ENCODE measurements at regions of chr11 and their contacts with region 1.

Region 1: GRCh38 chr11:123407130-123407995 is 22.7 kb upstream of the GRAMD1B start:
- DNase-seq: no peak
- H3K4me3 ChIP-seq: no peak overlapping the region
- CTCF ChIP-seq: peak; percentile 74

Region 2: DNA sequence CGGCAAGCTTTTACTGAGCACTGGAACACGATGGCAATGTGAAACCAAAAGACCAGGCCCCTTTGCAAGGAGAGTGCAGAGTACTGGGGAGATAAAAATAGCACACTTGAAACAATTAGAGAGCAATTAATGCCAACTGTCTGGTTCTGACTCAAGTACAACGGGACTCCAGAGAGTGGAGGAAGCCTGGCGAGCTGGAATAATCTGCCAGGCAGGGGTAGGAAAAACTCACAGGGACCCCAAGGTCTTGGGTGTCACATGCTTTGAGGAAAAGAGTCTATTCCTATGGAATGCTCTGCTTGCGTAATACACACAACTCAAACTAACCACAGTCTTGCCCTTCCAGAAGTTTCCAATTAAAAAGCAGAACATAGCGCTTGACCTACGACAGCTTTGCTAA is 99.3 kb before region 1 on chr11:
- CTCF ChIA-PET with region 1: interaction called, 10 read pairs
- POLR2A ChIA-PET with region 1: no interaction called
- DNase-seq: peak; percentile 47
- H3K4me3 ChIP-seq: no peak overlapping the region; the same call in 1 of the 2 replicates
- CTCF ChIP-seq: no peak

Region 3: DNA sequence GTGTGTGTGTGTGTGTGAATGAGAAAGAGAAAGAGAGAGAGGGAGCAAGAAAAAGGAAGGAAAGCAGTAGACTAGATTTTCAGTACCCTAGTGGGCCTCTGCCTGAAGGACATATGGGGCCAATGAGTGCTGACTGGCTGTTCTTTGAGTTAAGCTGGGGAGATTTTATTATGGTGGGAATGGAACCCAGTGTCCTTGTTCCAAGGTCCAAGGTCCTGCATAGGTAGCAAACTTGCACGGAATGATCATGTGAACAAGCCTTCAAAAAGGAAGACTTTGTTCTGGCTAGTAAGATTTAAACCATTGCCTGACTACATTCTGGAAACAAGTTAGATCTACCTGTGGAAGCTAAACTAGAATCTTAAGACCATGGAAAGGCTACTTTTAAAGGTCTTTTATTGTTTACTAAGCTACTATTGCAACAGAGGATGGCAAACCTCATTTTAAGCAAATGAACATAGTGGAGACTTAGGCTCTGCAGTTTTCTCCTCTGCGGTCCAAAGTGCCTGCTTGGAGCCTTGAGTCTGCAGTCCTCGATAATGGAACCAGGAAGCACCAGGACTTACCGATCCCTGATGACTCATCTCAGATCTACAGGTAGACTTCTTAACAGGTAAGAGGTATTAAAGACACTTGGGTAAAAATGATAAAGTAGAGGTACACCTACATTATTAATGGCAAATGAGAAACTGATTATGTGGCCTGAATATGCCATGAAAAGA is 12.5 kb after region 1 on chr11:
- CTCF ChIA-PET with region 1: interaction called, 53 read pairs
- POLR2A ChIA-PET with region 1: no interaction called
- DNase-seq: no peak
- H3K4me3 ChIP-seq: no peak overlapping the region
- CTCF ChIP-seq: no peak

Region 4: GRCh38 chr11:123461164-123461563 is 53.8 kb after region 1 on chr11:
- CTCF ChIA-PET with region 1: interaction called, 12 read pairs
- POLR2A ChIA-PET with region 1: no interaction called
- DNase-seq: no peak
- H3K4me3 ChIP-seq: no peak overlapping the region
- CTCF ChIP-seq: no peak

Region 5: GRCh38 chr11:123487157-123487780 is 79.9 kb after region 1 on chr11:
- CTCF ChIA-PET with region 1: interaction called, 422 read pairs
- POLR2A ChIA-PET with region 1: no interaction called
- DNase-seq: no peak
- H3K4me3 ChIP-seq: no peak overlapping the region
- CTCF ChIP-seq: no peak

Region 6: DNA sequence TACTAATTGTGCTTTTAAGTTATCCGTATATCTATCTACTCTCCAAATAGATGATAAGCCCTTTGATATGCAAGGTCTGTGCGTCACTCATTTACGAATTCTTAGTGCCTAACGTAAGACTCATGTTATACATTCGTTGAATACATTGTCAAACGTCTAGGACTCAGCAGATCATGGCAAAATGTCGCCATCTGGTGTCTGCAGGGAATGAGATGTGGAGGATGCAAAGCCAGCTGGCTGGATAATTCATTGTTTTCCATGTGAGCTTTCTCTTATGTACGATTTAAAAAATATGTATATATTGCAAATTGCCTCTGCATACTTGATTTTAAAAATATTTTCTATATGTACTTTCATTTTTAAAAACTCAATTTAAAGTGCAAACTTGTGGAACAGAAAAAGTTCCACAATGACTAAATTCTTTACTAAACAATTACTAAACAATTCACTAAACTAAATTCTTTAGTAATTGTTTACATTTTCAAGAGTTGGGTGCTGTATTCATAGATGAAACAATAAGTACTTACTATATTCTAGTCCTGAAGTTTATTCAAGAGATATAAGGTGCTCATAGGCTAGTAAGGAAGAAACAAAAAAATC is 300.3 kb after region 1 on chr11:
- CTCF ChIA-PET with region 1: interaction called, 15 read pairs
- POLR2A ChIA-PET with region 1: no interaction called
- DNase-seq: peak; percentile 26
- H3K4me3 ChIP-seq: no peak overlapping the region
- CTCF ChIP-seq: peak; percentile 71